GM13977 (cell line): ENCODE measurements at regions of chr15 and their contacts with region 1.

Region 1: DNA sequence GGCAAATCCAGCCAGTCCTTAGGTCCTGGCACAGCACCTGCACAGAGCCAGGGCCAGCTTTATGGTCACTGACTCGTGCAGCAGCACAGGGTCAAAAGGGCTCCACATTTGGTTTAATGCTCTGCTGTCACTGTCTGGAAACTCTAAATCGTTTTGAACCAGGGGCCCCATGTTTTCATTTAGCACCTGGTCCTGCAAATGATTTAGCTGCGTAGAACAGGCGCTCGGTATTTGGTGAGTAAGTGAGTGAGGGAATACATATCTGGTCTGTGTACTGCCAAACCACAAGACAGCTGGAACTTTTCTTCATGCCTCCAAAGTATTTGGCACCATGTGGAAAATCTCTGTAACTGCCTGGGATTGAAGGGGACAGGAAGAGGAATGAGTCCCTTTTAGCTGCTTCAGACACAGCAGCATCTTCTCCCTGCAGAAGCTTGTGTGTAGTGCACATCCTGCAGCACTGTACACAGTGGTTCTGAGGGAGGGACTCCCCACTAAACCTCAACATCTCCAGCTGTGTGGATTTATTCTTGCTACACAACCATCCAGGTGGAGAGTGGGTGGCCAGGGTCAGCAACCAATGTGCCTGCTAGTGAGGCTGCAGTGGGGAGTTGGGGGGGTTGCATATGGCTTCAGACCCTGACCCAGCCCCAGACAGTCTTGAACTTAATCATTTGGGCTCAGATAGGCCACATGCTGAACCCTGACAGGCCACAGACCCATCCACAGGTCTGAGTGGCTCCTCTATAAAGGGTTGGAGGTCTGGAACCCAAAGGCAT is 1.1 kb downstream of the SH2D7 start:
- DNase-seq: no peak
- CTCF ChIP-seq: no peak

Region 2: GRCh38 chr15:77738441-77739302 is 354.8 kb before region 1 on chr15:
- in situ Hi-C with region 1: no loop called
- DNase-seq: no peak
- CTCF ChIP-seq: no peak

Region 3: GRCh38 chr15:77986891-77987764 is 106.3 kb before region 1 on chr15:
- in situ Hi-C with region 1: no loop called
- DNase-seq: no peak
- CTCF ChIP-seq: no peak

Region 4: GRCh38 chr15:78000091-78000926 is 93.1 kb before region 1 on chr15:
- in situ Hi-C with region 1: loop called (anchors 10 kb)
- DNase-seq: peak; percentile 77
- CTCF ChIP-seq: peak; percentile 93

Region 5: GRCh38 chr15:78212546-78213424 is 119.4 kb after region 1 on chr15:
- in situ Hi-C with region 1: no loop called
- DNase-seq: no peak
- CTCF ChIP-seq: no peak